ENCODE measurements at regions of chr5 and their contacts with region 1.

Region 1: GRCh38 chr5:14011089-14012004 is 66.9 kb upstream of the DNAH5 start:
- DNase-seq: peak; percentile 87
- H3K4me3 ChIP-seq: peak overlapping the region; percentile 81
- H3K27ac ChIP-seq: peak overlapping the region; percentile 89
- H3K27me3 ChIP-seq: no peaks in the 10 kb centered on the region
- CTCF ChIP-seq: no peak

Region 2: GRCh38 chr5:13613621-13614020 is 397.7 kb before region 1 on chr5:
- in situ Hi-C with region 1: no loop called
- DNase-seq: no peak
- H3K4me3 ChIP-seq: no peak overlapping the region
- H3K27ac ChIP-seq: no peak overlapping the region
- H3K27me3 ChIP-seq: no peaks in the 10 kb centered on the region
- CTCF ChIP-seq: no peak

Region 3: DNA sequence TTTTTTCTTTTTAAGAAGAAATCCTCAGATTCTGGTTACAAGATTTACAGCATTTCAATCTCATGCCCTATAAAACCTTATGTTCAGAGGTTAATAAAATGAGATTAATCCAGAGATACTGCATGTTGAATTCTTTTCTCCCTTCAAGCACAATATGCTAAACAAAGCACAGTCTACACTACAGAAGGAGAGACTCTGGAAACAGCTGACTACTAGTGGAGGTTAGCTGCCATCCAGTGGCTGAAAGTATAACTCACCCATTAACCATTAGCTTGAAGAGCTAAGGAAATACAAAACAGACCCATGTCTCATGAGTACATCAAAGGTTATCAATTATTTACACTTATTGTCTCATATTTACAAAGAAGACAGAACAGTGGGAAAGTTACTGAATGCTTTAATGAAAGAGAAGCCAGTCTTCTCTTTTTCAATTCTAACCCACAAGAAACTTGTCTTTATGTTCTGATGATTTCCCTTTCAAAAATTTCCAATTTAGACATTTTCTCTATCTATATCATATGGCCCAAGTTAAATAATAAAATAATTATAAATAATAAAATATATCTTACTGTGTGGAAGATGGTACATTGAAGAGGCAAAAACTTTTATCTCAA is 54.2 kb before region 1 on chr5:
- in situ Hi-C with region 1: no loop called
- DNase-seq: peak; percentile 77
- H3K4me3 ChIP-seq: no peak overlapping the region
- H3K27ac ChIP-seq: no peak overlapping the region
- H3K27me3 ChIP-seq: no peaks in the 10 kb centered on the region
- CTCF ChIP-seq: peak; percentile 76

Region 4: GRCh38 chr5:14313986-14314690 is 302.8 kb after region 1 on chr5:
- in situ Hi-C with region 1: no loop called
- DNase-seq: no peak
- H3K4me3 ChIP-seq: no peak overlapping the region
- H3K27ac ChIP-seq: no peak overlapping the region
- H3K27me3 ChIP-seq: no peaks in the 10 kb centered on the region
- CTCF ChIP-seq: no peak

Region 5: GRCh38 chr5:14326035-14326903 is 314.9 kb after region 1 on chr5:
- in situ Hi-C with region 1: loop called (anchors 25 kb)
- DNase-seq: no peak
- H3K4me3 ChIP-seq: no peak overlapping the region
- H3K27ac ChIP-seq: no peak overlapping the region
- H3K27me3 ChIP-seq: no peaks in the 10 kb centered on the region
- CTCF ChIP-seq: peak; percentile 51

Measured in brain microvascular endothelial cell (primary cell).